Right cardiac atrium (tissue), 5 donors: ENCODE measurements at regions of chr10 and their contacts with region 1.

Region 1: DNA sequence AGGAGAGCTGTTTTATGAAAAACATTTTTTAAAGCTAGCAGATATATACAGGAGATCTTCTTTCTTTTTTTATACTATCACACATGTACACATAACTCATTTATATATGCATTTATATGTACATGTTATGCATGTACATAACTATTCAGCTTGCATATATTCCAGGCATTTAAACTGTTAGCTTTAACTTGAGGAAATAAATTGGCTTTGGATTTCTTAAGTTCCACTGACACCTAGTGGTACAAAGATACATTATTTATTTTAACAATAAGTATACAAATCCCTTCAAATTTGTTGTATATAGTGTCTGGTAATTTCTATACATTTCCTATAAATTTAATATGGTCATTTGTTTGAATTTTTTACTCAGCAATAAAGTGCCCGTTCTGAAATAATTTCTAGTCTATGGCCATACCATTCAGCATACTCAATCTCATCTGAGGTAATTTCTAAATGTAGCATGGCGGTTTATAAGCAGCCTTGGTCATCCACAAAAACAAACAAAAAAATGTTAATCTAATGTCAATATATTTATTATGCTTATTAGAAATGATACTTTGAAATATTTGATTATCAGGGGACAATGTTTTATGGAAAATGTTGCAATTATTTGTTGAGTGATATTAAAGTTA is 11.6 kb downstream of the ZDHHC6 start:
- DNase-seq: no peak
- ATAC-seq: no peak
- H3K4me3 ChIP-seq: no peak overlapping the region
- H3K27ac ChIP-seq: no peak overlapping the region
- H3K4me1 ChIP-seq: no peaks in the 10 kb centered on the region
- H3K27me3 ChIP-seq: no peaks in the 10 kb centered on the region

Region 2: DNA sequence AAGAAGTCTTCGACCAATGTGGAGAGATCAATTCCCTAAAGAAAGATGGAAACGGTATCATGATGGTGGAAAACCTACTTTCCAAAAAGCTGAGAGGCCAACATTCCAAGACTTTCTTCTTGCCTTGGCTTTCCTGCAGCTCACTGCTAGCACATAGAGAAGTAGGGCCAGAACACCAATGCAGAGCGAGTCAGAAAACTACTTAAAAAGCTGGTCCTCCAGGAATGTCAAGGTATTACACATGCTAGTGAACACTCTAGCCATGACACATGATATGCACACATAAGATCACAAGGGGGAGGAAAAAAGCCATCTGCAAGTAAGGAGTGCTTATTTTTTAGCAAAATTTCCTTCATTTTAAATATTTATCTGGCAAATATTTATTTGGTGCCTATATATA is 274.3 kb before region 1 on chr10:
- intact Hi-C with region 1: loop called in 1 of 4 experiments (anchors 10 kb)
- DNase-seq: no peak
- ATAC-seq: no peak
- H3K4me3 ChIP-seq: no peak overlapping the region
- H3K27ac ChIP-seq: no peak overlapping the region
- H3K4me1 ChIP-seq: no peaks in the 10 kb centered on the region
- H3K27me3 ChIP-seq: no peaks in the 10 kb centered on the region

Region 3: GRCh38 chr10:112177247-112177646 is 257.9 kb before region 1 on chr10:
- intact Hi-C with region 1: loop called in 2 of 4 experiments (anchors 10 kb)
- DNase-seq: no peak
- ATAC-seq: peak; percentile 55 to 74
- H3K4me3 ChIP-seq: no peak overlapping the region
- H3K27ac ChIP-seq: no peak overlapping the region
- H3K4me1 ChIP-seq: no peaks in the 10 kb centered on the region
- H3K27me3 ChIP-seq: no peaks in the 10 kb centered on the region

Region 4: DNA sequence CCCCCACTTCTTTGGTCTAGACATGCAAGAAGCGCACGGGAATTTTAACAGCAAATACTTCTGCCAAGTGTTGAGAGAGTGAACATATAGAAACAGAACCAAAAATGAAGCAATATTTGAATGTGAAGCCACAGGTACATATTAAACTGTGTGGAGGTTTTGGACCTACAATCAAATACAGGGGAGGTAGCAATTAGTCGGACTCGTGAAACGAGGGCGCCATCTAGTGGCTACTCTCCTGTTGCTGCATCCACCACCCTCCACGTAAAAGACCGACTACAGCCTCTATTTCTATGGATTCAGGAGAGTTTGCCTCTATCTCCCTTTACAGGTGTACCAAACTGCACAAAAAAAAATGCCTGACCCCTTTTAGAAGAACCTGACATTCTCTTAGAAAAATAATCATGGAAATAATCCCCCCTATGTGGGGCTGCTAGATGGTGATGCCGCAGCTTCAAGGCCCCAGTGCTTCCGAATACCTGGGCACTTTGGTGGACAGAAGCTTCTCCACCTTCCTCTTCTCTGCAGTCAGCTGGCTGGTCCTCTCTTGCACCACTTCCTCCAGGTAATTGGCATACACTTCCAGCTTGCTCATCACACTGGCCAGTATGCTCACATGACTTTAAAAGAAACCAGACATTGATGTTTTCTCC is 120.2 kb before region 1 on chr10:
- intact Hi-C with region 1: loop called in 1 of 4 experiments (anchors 10 kb)
- DNase-seq: peak; percentile 79 to 92 (median 86)
- ATAC-seq: peak; percentile 87 to 90
- H3K4me3 ChIP-seq: no peak overlapping the region
- H3K27ac ChIP-seq: no peak overlapping the region
- H3K4me1 ChIP-seq: no peaks in the 10 kb centered on the region
- H3K27me3 ChIP-seq: no peaks in the 10 kb centered on the region

Region 5: DNA sequence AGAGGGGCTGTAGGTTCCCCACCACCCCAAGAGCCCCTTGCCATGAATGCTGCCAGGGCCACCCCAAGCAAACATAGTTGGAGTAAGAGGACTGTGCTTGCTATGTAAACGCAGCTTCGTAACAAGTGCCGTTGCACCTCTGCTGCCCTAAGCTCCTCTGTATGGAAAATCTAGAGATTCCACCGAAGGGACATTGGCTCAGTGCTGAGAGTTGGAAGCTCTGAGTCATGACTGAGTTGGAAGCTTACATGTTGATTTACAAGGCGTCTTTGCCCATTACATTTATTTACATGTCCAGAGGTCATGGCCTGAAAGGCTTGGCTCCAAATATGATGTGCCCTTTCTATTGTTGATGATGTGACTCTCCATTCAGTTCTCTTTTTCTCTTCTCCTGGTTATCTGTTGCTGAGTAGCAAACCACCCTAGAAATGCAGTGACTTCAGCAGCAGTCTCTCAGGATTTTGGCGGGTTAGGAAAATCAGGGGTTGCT is 281.9 kb after region 1 on chr10:
- intact Hi-C with region 1: no loop called
- DNase-seq: no peak
- ATAC-seq: peak; percentile 47 to 90
- H3K4me3 ChIP-seq: no peak overlapping the region
- H3K27ac ChIP-seq: no peak overlapping the region
- H3K4me1 ChIP-seq: no peaks in the 10 kb centered on the region
- H3K27me3 ChIP-seq: no peaks in the 10 kb centered on the region